PC-9 (cell line): ENCODE measurements at regions of chr9 and their contacts with region 1.

Region 1: GRCh38 chr9:131334629-131335367 is 45.3 kb downstream of the PLPP7 start:
- DNase-seq: no peak
- H3K4me3 ChIP-seq: no peak overlapping the region
- H3K27ac ChIP-seq: no peak overlapping the region
- H3K4me1 ChIP-seq: peaks cover under 1% of the 10 kb centered on the region; the same call in 1 of the 2 replicates
- H3K27me3 ChIP-seq: no peaks in the 10 kb centered on the region
- CTCF ChIP-seq: no peak

Region 2: DNA sequence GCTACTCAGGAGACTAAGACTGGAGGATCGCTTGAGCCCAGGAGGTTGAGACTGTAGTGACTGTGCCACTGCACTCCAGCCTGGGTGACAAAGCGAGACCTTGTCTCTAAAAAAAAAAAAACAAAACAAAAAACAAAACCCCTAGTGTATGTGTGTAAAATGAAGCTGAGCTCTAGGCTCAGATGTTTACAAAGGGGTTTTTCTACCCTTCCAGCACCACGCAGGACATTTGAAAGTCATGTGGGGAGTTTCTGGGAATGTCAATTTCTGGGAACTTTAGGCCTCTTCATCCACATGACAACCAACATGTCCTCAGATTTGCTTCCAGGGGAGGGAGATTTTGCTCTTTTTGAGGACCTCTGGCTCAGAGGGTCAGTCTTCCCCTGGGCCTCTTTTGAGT is 280.9 kb before region 1 on chr9:
- CTCF ChIA-PET with region 1: interaction called, 6 read pairs
- POLR2A ChIA-PET with region 1: no interaction called
- intact Hi-C with region 1: loop called (anchors 1 kb)
- DNase-seq: no peak
- H3K4me3 ChIP-seq: no peak overlapping the region
- H3K27ac ChIP-seq: no peak overlapping the region
- H3K4me1 ChIP-seq: no peaks in the 10 kb centered on the region
- H3K27me3 ChIP-seq: no peaks in the 10 kb centered on the region
- CTCF ChIP-seq: no peak

Region 3: DNA sequence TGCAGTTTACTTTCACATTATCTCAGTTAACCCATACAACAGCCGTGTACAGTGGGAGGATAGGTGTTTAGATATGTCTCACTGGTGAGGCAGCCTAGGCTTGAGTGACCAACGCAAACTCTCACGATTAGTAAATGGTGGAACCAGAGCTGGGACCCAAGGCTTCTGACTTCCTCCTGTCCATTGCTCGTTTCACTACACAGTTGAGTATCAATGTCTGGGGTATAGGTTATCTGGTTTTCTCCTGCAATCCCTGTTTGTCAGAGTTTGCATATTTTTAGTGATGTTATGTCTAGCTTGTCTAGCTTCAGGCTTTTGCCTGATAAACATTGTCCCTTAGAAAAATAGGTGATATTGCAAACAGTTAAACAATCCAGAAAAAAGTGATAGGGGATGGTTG is 146.8 kb before region 1 on chr9:
- CTCF ChIA-PET with region 1: no interaction called
- POLR2A ChIA-PET with region 1: no interaction called
- intact Hi-C with region 1: no loop called
- DNase-seq: no peak
- H3K4me3 ChIP-seq: no peak overlapping the region
- H3K27ac ChIP-seq: no peak overlapping the region
- H3K4me1 ChIP-seq: no peaks in the 10 kb centered on the region
- H3K27me3 ChIP-seq: no peaks in the 10 kb centered on the region
- CTCF ChIP-seq: no peak

Region 4: DNA sequence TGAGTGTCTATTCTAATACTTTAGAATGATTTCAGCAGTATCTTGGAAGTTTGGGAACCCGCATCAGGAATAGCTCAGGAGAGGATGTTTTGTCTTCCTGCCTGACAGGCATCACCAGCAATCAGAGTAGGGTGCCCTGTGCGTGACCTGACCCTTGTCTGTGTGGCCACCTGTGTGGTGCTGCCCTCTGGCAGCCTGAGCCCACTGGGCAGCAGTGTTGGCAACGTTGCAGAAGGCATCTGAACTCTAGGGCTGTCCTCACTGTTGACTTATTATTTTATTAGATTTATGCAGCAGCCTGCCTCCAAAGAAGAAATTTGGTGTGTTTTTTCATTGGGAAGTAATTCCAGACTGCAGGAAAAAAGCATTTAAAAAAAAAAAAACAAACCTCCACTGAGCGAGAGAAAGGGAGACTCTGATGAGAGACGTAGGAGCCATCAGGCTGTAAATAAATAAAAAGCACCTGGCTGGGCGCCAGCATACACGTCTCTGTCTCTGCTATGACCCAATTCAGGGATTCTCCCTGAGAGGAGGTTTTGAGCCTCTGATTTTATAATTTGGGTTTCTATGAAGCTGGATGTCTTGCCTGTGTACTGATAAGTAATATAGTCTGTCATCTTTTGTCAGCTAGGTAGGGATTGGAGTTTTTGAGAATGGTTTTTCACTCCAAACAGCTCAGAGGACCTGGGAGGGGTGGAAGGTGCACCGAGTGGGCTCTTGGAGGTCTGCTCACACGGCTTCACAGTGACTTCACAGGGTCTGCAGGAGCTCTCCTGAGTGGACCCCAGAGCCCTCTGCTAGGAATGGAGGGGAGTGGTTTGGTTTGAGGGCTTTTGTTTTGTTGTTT is 107.5 kb before region 1 on chr9:
- CTCF ChIA-PET with region 1: no interaction called
- POLR2A ChIA-PET with region 1: no interaction called
- intact Hi-C with region 1: loop called (anchors 10 kb)
- DNase-seq: no peak
- H3K4me3 ChIP-seq: no peak overlapping the region
- H3K27ac ChIP-seq: no peak overlapping the region
- H3K4me1 ChIP-seq: no peaks in the 10 kb centered on the region
- H3K27me3 ChIP-seq: no peaks in the 10 kb centered on the region
- CTCF ChIP-seq: no peak

Region 5: GRCh38 chr9:131277910-131278701 is 56.7 kb before region 1 on chr9:
- CTCF ChIA-PET with region 1: no interaction called
- POLR2A ChIA-PET with region 1: no interaction called
- intact Hi-C with region 1: loop called (anchors 5 kb)
- DNase-seq: peak; percentile 38 to 46
- H3K4me3 ChIP-seq: peak overlapping the region; percentile 74; the same call in 1 of the 2 replicates
- H3K27ac ChIP-seq: no peak overlapping the region
- H3K4me1 ChIP-seq: no peaks in the 10 kb centered on the region
- H3K27me3 ChIP-seq: peaks cover 32% of the 10 kb centered on the region
- CTCF ChIP-seq: no peak

Region 6: DNA sequence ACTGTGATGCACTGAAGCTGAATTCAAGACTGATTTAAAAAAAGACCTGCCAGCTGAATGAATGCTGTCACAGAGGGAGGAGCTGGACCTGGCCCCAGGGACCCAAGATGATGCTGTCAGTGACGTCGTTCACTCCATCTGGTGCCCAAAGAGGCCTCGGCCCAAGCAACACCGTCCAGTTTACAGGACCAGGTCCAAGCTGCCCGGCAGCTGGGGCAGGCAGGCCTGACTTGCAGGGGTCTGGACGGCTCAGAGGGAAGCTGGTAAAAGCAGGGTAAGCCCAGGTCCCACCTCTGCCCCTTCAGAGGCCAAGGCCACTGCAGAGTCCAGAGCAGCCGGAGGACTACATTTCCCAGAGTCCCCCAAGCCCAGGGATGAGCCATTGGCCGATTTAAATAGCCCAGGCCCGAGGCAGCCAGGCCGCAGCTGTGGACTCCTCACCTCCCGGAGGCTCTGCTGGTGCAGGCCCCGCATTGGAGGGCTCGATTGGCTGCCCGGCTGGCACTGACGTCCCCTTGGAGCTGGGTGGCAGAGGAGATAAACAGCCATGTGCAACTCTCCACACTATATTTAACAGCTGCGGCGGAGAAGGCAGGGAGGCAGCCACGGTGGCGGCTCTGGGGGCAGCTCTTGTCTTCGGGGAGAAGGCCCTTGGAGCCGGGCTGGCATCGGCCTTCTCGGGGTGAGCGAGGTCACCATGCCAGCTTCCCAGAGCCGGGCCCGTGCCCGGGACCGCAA is 45.3 kb before region 1 on chr9 and contains the start of gene PLPP7:
- CTCF ChIA-PET with region 1: no interaction called
- POLR2A ChIA-PET with region 1: no interaction called
- intact Hi-C with region 1: no loop called
- DNase-seq: no peak
- H3K4me3 ChIP-seq: no peak within 1 kb of the TSS
- H3K27ac ChIP-seq: no peak within 1 kb of the TSS
- H3K4me1 ChIP-seq: no peaks in the 10 kb centered on the region
- H3K27me3 ChIP-seq: no peaks in the 10 kb centered on the region
- CTCF ChIP-seq: no peak
- total RNA-seq, gene PLPP7: not detected in 2 replicates

Region 7: DNA sequence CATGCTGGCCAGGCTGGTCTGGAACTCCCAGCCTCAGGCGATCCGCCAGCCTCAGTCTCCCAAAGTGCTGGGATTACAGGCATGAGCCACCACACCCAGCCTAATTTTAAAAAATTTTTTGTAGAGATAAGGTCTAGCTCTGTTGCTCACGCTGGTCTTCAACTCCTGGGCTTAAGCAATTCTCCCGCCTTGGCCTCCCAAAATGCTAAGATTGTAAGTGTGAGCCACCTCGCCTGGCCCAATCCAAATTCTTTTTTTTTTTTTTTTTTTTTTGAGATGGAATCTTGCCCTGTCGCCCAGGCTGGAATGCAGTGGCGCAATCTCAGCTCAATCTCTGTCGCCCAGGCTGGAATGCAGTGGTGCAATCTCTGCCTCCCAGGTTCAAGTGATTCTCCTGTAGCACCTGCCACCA is 17.8 kb before region 1 on chr9:
- CTCF ChIA-PET with region 1: no interaction called
- POLR2A ChIA-PET with region 1: no interaction called
- intact Hi-C with region 1: loop called (anchors 2 kb)
- DNase-seq: peak; percentile 83
- H3K4me3 ChIP-seq: no peak overlapping the region
- H3K27ac ChIP-seq: peak overlapping the region; percentile 44
- H3K4me1 ChIP-seq: peaks cover 37% of the 10 kb centered on the region
- H3K27me3 ChIP-seq: no peaks in the 10 kb centered on the region
- CTCF ChIP-seq: no peak